Activated naive CD4-positive, alpha-beta T cell treated with anti-CD3 and anti-CD28 coated beads for 36 hours (primary cell): ENCODE measurements at regions of chr21 and their contacts with region 1.

Region 1: DNA sequence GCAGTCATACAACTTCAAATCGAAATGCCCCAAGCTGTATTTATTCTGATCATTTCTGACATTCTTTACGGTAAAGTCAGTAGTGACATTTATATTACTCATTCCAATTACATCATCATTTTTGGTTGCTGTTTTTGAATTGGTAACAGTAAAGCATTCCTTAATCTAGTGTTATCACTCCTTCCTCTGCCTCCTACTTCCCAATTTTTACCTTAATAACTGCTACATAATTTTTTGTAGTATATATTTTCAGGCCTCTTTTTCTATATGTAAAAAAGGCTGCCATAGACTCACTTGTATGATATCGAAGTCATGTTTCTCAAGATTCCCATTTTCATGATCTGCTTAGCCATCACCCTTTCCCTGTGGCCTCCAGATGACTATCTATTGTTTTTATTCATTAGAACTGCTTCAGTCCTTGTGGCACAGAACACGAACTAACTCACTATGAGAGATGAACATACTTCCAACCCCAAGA is 167.2 kb downstream of the RUNX1 start:
- DNase-seq: no peak
- H3K4me3 Mint-ChIP-seq: peak overlapping the region; percentile 55
- H3K27ac Mint-ChIP-seq: peak overlapping the region; percentile 84
- H3K4me1 Mint-ChIP-seq: peaks cover 61% of the 10 kb centered on the region
- H3K27me3 Mint-ChIP-seq: no peaks in the 10 kb centered on the region

Region 2: DNA sequence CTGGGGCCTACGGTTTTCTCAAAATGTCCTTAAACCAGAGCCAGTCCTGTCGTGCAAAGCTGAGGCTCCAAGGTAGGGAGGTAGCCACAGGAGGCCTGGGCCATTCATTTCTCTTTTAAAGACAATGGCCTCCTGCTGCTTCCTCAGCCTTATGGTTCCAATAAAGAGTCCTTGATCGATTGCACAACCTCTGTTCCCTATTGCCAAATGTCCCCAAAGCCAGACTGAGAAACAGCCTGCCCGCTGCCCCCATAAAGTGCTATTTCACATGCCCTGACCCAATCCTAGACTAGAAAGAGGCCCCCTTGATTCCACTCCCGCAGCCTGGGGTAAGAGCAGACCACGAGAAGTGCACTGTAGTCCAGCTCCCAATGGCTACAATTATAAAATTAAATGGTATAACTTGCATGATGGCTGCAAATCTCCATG is 46.4 kb before region 1 on chr21:
- CTCF ChIA-PET with region 1: no interaction called
- intact Hi-C with region 1: no loop called
- DNase-seq: no peak
- H3K4me3 Mint-ChIP-seq: no peak overlapping the region
- H3K27ac Mint-ChIP-seq: peak overlapping the region; percentile 75
- H3K4me1 Mint-ChIP-seq: peaks cover 45% of the 10 kb centered on the region
- H3K27me3 Mint-ChIP-seq: no peaks in the 10 kb centered on the region

Region 3: DNA sequence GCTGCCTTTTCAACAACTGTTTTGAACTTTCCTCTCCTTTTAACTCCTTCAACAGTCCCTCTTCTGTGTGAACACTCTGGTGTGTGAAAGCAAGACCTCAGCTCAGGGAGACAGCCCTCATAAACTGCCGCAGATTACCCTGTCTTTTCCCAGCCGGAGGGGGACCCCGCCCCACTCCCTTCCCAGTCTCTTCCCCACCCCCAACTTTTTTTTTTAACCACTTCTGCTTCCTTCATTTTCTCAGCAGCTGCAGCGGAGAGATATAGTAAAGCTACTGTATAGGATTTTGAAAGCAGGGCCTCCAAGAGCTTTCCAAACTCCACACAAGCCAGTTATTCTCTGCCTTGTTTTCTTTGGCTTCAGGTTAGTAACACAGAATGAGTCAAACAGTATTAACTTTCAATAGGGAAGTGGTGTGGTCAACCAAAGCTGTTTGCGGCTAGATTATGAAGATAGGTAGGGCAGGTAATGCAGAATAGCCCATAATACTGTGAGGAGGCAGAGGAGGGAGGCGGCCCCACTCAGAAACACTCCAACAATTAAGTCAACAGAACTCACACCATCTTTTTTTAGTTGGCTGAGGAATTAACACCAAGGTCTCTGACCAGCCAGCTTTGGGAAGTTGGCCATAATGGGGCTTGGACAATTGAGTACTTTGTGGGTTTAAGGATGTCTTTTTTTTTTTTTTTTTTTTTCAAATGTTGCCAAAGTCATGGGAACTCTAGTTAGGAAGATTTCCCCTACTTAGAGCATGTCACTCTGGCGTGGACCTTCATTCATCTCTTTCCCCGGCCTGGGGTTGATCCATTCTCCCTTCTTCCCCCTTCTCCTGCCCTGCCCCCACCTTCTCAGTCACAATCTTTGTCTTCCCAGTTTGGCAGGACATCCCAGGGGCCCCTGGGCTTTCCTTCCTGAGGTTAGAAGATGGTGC is 36.1 kb before region 1 on chr21:
- CTCF ChIA-PET with region 1: no interaction called
- intact Hi-C with region 1: loop called (anchors 2 kb)
- DNase-seq: peak; percentile 23
- H3K4me3 Mint-ChIP-seq: no peak overlapping the region
- H3K27ac Mint-ChIP-seq: peak overlapping the region; percentile 50
- H3K4me1 Mint-ChIP-seq: peaks cover 40% of the 10 kb centered on the region
- H3K27me3 Mint-ChIP-seq: no peaks in the 10 kb centered on the region

Region 4: DNA sequence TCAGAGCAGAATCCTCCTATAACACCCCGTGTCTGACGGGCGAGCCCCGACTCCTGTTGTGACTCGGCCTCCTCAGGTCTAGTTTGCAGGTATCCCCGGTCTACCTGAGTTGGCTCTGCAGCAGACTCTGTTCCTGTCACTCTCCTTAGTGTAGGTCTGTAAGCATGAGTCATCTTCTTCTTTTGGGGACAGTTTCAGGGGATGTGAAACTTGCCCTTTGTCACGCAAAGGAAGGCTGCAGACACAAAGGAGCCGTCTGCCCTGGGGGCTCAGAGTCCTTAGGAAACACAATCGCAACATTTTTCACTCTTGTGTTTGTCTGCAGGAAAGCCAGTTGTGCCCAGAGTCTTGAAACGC is 16.0 kb before region 1 on chr21:
- CTCF ChIA-PET with region 1: interaction called, 4 read pairs
- intact Hi-C with region 1: loop called (anchors 1 kb)
- DNase-seq: peak; percentile 76
- H3K4me3 Mint-ChIP-seq: no peak overlapping the region
- H3K27ac Mint-ChIP-seq: peak overlapping the region; percentile 74
- H3K4me1 Mint-ChIP-seq: peaks cover 70% of the 10 kb centered on the region
- H3K27me3 Mint-ChIP-seq: no peaks in the 10 kb centered on the region